Vagina (tissue), 2 donors: ENCODE measurements at regions of chr14 and their contacts with region 1.

Region 1: DNA sequence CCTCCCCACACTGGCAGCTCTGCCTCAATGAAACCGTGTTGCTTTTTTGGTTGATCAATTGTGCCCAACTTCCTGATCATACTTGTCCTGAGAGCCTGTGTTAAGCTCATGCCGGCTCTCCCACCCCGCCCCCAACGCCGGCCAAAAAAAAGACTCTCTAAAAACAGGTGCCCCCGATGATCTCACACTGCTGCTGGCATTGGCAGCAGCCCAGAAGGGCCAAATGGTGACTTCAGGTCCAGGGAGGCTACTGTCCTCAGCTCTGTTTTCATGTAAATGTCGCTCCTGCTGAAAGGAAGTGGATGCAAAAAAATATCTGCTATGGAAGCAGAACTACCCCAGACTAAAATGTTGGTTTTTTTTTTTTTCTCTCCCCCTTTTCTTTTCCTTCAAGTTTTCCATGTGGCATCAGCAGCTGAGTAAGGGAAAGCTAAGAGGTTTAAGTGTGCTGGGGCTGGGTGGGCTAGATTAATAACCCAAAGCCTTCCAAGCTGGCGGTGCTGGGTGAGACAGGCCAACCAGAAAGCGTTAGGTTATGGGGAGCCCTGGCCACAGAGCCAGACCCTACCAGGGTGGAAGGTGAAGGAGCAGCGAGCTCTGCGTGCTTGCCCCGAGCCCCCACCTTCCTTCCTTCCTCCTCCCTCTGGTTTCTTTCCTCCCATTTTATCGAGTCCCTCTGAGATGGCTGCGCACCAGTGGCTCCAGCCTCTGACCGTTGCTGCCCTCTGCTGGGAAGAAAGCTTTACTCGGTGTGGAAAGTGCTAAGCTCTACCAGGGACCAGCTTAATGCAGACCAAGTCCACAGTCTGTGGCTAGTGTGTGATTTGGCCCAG is 396.1 kb downstream of the NRXN3 start:
- DNase-seq: no peak
- H3K4me3 ChIP-seq: peak overlapping the region in 1 of 2 donors; percentile 28
- H3K27ac ChIP-seq: no peak overlapping the region
- H3K4me1 ChIP-seq: no peaks in the 10 kb centered on the region
- H3K27me3 ChIP-seq: no peaks in the 10 kb centered on the region
- CTCF ChIP-seq: peak; percentile 27 to 50 (median 48)
- POLR2A ChIP-seq: no peak

Region 2: GRCh38 chr14:77862154-77862786 is 704.0 kb before region 1 on chr14:
- intact Hi-C with region 1: loop called (anchors 10 kb)
- DNase-seq: no peak
- H3K4me3 ChIP-seq: no peak overlapping the region
- H3K27ac ChIP-seq: no peak overlapping the region
- H3K4me1 ChIP-seq: no peaks in the 10 kb centered on the region
- H3K27me3 ChIP-seq: no peaks in the 10 kb centered on the region
- CTCF ChIP-seq: peak; percentile 62 to 77 (median 76)
- POLR2A ChIP-seq: no peak